ENCODE measurements at regions of chr6 and their contacts with region 1.

Region 1: DNA sequence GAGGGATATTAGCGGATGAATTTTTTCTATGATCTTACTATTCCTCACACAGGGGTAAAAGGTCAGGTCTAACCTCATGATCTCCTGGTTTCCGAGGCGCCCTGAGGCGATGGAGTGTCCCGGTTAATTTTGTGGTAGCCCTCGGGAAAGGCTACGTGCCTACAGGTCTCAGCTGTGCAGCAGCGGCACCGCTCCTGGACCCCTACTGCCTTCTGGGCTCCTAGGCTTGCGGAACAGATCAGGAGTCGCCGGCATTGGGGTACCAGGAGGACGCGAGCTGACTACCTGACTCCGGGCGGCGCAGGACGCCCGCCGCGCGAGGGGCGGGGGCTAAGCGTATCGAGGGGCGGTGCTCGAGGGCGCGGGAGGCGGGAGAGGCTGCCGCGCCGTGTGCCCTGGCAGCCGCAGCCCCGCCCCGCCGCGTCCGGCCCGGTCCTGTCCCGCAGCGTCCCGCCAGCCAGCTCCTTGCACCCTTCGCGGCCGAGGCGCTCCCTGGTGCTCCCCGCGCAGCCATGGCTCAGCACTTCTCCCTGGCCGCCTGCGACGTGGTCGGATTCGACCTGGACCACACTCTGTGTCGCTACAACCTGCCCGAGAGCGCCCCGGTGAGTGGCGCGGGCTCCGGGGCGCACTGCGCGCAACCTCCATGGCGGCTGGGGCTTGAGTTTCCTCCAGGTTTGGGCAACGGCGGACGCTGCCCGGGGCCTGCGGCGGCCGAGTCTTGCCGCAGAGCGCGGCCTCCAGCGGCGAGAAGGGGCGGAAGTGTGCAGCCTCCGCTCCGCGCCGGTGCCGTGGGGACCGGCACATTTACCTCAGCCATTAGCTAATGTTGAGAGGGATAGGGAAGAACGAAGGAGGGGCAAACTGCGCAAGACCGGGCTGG is at the start of gene NT5DC1:
- DNase-seq: peak; percentile 76 to 85
- H3K4me3 ChIP-seq: peak within 1 kb of the TSS; percentile 68
- H3K27ac ChIP-seq: peak within 1 kb of the TSS; percentile 61
- H3K4me1 ChIP-seq: peaks cover 22% of the 10 kb centered on the region
- H3K27me3 ChIP-seq: no peaks in the 10 kb centered on the region
- CTCF ChIP-seq: peak; percentile 61
- total RNA-seq, gene NT5DC1: 33.2 and 33.5 TPM in 2 replicates

Region 2: DNA sequence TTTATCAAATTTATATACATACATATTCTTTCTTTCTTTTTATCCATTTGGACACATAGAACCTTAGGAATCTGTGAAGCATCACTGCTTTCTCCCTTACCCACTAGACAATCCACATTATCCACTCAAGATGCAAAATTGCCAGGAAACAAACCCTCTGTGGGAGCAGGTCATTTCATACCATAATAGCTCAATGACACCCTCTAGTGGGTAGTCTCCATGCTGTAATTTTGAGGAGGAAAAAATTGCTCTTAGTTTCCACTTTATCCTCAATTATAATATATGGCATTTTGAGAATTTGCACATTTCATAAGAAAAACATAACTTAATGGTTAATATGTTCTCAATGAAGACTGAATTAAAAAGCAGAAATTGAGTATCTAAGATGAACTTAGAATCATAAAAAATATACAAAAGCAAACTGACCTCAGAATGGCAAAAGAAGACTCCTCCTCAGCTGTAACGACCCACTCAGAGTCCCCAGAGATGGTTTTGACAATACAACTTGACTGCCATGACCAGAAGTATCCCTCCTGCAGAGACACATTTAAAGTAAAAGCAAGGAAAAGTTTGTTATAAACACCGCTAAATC is 204.0 kb before region 1 on chr6:
- CTCF ChIA-PET with region 1: no interaction called
- POLR2A ChIA-PET with region 1: no interaction called
- intact Hi-C with region 1: loop called (anchors 10 kb)
- DNase-seq: no peak
- H3K4me3 ChIP-seq: no peak overlapping the region
- H3K27ac ChIP-seq: no peak overlapping the region
- H3K4me1 ChIP-seq: peaks cover 9% of the 10 kb centered on the region; the same call in 1 of the 2 replicates
- H3K27me3 ChIP-seq: no peaks in the 10 kb centered on the region
- CTCF ChIP-seq: peak; percentile 96

Region 3: DNA sequence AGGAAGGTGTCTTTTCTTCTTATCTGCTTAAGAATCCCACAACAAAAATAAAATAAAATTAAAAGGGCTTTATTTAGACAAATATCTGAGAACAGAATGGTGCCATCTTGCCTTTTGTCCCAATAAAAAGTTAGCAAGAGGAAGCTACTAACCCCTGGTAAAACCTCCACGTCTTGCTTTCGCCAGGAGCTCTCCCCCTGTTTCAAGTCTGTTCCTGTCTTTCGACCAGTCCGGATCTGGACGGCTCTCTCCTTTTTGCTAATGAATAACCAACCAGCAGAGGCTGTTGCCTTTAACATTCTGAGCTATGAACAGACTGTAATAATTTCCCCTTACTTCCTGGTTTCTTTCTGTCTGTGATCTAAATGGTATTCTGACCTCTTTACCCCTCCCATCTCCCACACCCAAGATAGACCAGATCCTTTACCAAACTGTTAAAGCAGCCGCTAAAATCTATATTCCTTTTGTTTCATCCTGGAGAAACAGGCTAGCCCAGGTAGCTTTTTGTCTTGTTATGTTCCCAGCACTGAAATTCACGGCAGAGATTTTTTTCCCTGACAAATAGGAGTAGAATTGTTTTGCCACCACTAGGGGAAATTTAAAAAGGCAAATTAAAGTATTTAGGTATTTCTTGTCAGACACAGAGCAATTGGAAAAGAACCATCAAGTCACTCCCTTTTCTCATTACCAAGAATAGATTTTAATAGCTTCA is 39.9 kb before region 1 on chr6 and contains the start of gene FRK:
- CTCF ChIA-PET with region 1: no interaction called
- POLR2A ChIA-PET with region 1: interaction called, 7 read pairs
- intact Hi-C with region 1: loop called (anchors 1 kb)
- DNase-seq: peak; percentile 58 to 93
- H3K4me3 ChIP-seq: peak within 1 kb of the TSS; percentile 64
- H3K27ac ChIP-seq: peak within 1 kb of the TSS; percentile 91
- H3K4me1 ChIP-seq: peaks cover 44% of the 10 kb centered on the region
- H3K27me3 ChIP-seq: no peaks in the 10 kb centered on the region
- CTCF ChIP-seq: peak; percentile 68
- total RNA-seq, gene FRK: 14.4 and 17.2 TPM in 2 replicates

Region 4: GRCh38 chr6:116253505-116254296 is 153.0 kb after region 1 on chr6 and contains the start of gene TSPYL4:
- CTCF ChIA-PET with region 1: no interaction called
- POLR2A ChIA-PET with region 1: no interaction called
- intact Hi-C with region 1: no loop called
- DNase-seq: peak; percentile 87 to 95
- H3K4me3 ChIP-seq: peak within 1 kb of the TSS; percentile 82
- H3K27ac ChIP-seq: peak within 1 kb of the TSS; percentile 77
- H3K4me1 ChIP-seq: peaks cover 46% of the 10 kb centered on the region
- H3K27me3 ChIP-seq: no peaks in the 10 kb centered on the region
- CTCF ChIP-seq: no peak
- total RNA-seq, gene TSPYL4: 10.6 and 10.9 TPM in 2 replicates

Measured in PC-9 (cell line).